ENCODE measurements at regions of chr10 and their contacts with region 1.

Region 1: GRCh38 chr10:71075086-71075758 is 137.1 kb upstream of the UNC5B start:
- DNase-seq: no peak
- H3K4me3 ChIP-seq: no peak overlapping the region
- H3K27ac ChIP-seq: no peak overlapping the region
- H3K4me1 ChIP-seq: peaks cover 3 to 27% (median 11%) of the 10 kb centered on the region in 4 experiments; a peak in 6 of 7 replicates
- H3K27me3 ChIP-seq: no peaks in the 10 kb centered on the region; a peak in 2 of 7 replicates
- CTCF ChIP-seq: no peak
- EP300 ChIP-seq: no peak
- POLR2A ChIP-seq: no peak
- RAD21 ChIP-seq: no peak

Region 2: GRCh38 chr10:71015674-71016073 is 59.5 kb before region 1 on chr10:
- CTCF ChIA-PET with region 1: interaction called, 10 read pairs
- POLR2A ChIA-PET with region 1: no interaction called
- DNase-seq: no peak
- H3K4me3 ChIP-seq: no peak overlapping the region
- H3K27ac ChIP-seq: no peak overlapping the region
- H3K4me1 ChIP-seq: no peaks in the 10 kb centered on the region
- H3K27me3 ChIP-seq: no peaks in the 10 kb centered on the region
- CTCF ChIP-seq: no peak
- EP300 ChIP-seq: no peak
- POLR2A ChIP-seq: no peak
- RAD21 ChIP-seq: no peak

Region 3: GRCh38 chr10:71033396-71033980 is 41.7 kb before region 1 on chr10:
- CTCF ChIA-PET with region 1: interaction called, 14 read pairs
- POLR2A ChIA-PET with region 1: no interaction called
- DNase-seq: no peak
- H3K4me3 ChIP-seq: no peak overlapping the region
- H3K27ac ChIP-seq: no peak overlapping the region
- H3K4me1 ChIP-seq: peaks cover 0 to 2% (median 0%) of the 10 kb centered on the region in 4 experiments; a peak in 1 of 7 replicates
- H3K27me3 ChIP-seq: no peaks in the 10 kb centered on the region; a peak in 1 of 7 replicates
- CTCF ChIP-seq: peak; percentile 28 to 61 (median 33)
- EP300 ChIP-seq: no peak
- POLR2A ChIP-seq: no peak
- RAD21 ChIP-seq: peak in 1 of 2 experiments; percentile 42; a peak in 2 of 4 replicates

Region 4: GRCh38 chr10:71099731-71100361 is 24.6 kb after region 1 on chr10:
- CTCF ChIA-PET with region 1: no interaction called
- POLR2A ChIA-PET with region 1: no interaction called
- DNase-seq: no peak
- H3K4me3 ChIP-seq: no peak overlapping the region
- H3K27ac ChIP-seq: no peak overlapping the region
- H3K4me1 ChIP-seq: no peaks in the 10 kb centered on the region
- H3K27me3 ChIP-seq: no peaks in the 10 kb centered on the region
- CTCF ChIP-seq: no peak
- EP300 ChIP-seq: no peak
- POLR2A ChIP-seq: no peak
- RAD21 ChIP-seq: no peak